ENCODE measurements at regions of chr2 and their contacts with region 1.

Region 1: GRCh38 chr2:28392297-28393113 is at the start of gene FOSL2:
- DNase-seq: peak; percentile 87
- ATAC-seq: peak; percentile 89
- H3K4me3 ChIP-seq: peak within 1 kb of the TSS; percentile 80
- H3K27ac ChIP-seq: peak within 1 kb of the TSS; percentile 52
- H3K4me1 ChIP-seq: 0 out of 2 replicates have a peak, but pooled peaks cover 4% of the 10 kb centered on the region
- H3K27me3 ChIP-seq: peaks cover 2% of the 10 kb centered on the region in 2 experiments; a peak in 1 of 4 replicates
- CTCF ChIP-seq: 0 out of 6 replicates have a peak, but pooled peaks of 1 of the 3 experiments have one; percentile 0
- EP300 ChIP-seq: peak in 1 of 2 experiments; percentile 58; a peak in 1 of 4 replicates
- POLR2A ChIP-seq: peak; percentile 93
- RAD21 ChIP-seq: no peak
- polyA plus RNA-seq, gene FOSL2: 0.05 TPM

Region 2: DNA sequence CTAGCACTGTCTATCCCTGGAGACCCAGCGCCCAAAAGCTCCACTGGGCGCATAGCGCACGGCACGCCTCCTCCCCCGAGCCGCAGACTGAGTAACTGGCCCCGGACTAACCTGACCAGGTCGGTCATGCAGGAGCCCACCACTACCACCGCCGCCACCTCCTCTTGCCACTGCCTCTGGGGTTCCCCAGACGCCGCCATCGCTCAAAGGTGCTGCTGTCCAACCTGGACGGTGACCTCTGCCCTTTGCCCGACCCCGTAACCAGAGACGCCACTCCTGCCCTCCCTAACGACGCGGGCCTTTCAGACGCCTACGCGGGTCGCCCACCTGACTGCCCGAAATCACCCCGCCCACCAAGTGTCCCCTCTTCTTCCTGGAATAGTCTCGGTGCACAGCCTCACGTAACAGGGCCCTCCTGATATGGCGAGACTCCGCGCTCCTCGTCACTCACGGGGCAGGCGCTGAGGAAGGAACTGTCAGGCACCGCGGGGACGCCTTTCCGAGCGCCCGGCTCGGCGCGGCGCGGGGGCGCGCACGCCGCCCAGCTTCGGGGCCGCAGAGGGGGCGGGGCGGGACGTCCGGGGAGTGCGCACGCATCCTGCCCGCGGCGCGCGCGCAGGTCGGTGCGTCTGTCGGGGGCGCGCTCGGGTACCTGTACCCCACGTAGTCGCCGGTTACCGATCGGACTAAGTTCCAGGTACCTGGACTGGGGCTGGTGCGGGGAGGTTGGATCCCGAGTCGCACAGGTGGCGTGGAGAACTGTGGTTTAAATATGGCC is 502.2 kb before region 1 on chr2 and contains the starts of genes BABAM2 and RBKS:
- CTCF ChIA-PET with region 1: no interaction called
- POLR2A ChIA-PET with region 1: no interaction called
- RAD21 ChIA-PET with region 1: no interaction called
- SMC1A ChIA-PET with region 1: no interaction called
- in situ Hi-C with region 1: no loop called
- intact Hi-C with region 1: loop called (anchors 5 kb)
- DNase-seq: peak; percentile 58
- ATAC-seq: peak; percentile 88
- H3K4me3 ChIP-seq: peak within 1 kb of the TSS; percentile 89
- H3K27ac ChIP-seq: peak within 1 kb of the TSS; percentile 89
- H3K4me1 ChIP-seq: no peaks in the 10 kb centered on the region
- H3K27me3 ChIP-seq: no peaks in the 10 kb centered on the region
- CTCF ChIP-seq: no peak
- EP300 ChIP-seq: no peak
- POLR2A ChIP-seq: peak; percentile 88
- RAD21 ChIP-seq: no peak
- polyA plus RNA-seq, gene BABAM2: 42.7 to 59.9 TPM
- polyA plus RNA-seq, gene RBKS: 0.39 to 0.84 TPM

Region 3: DNA sequence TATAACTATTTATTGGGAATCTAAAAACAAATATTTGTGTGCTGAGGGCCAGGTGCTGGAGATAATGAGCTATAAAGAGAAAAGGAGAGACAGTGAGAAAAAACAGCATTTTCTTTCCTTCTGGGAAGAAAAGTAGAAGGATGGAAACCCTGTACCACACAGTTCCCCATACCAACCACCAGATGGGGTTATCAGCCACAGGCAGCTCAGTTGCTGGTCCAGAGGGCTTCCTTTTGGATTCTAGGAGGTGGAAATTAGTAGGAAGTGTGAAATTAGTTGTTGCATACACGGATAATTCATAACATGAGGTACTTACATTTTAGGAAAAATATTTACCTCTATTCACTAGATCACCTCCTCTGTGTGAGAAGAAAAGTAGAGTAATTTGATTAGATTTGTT is 236.9 kb before region 1 on chr2:
- CTCF ChIA-PET with region 1: interaction called, 3 read pairs
- POLR2A ChIA-PET with region 1: no interaction called
- RAD21 ChIA-PET with region 1: no interaction called
- SMC1A ChIA-PET with region 1: interaction called, 3 read pairs
- in situ Hi-C with region 1: no loop called
- intact Hi-C with region 1: loop called (anchors 10 kb)
- DNase-seq: no peak
- ATAC-seq: no peak
- H3K4me3 ChIP-seq: no peak overlapping the region
- H3K27ac ChIP-seq: no peak overlapping the region
- H3K4me1 ChIP-seq: no peaks in the 10 kb centered on the region
- H3K27me3 ChIP-seq: no peaks in the 10 kb centered on the region
- CTCF ChIP-seq: peak in 2 of 3 experiments; percentile 42 to 55; a peak in 5 of 6 replicates
- EP300 ChIP-seq: no peak
- POLR2A ChIP-seq: no peak
- RAD21 ChIP-seq: peak; percentile 46